ENCODE measurements at regions of chr2 and their contacts with region 1.

Region 1: GRCh38 chr2:234135720-234136221 is 85.3 kb downstream of the SPP2 start:
- DNase-seq: peak; percentile 83 to 88
- H3K4me3 ChIP-seq: no peak overlapping the region
- H3K4me1 ChIP-seq: no peaks in the 10 kb centered on the region
- H3K27me3 ChIP-seq: 0 out of 2 replicates have a peak, but pooled peaks cover 2% of the 10 kb centered on the region

Region 2: DNA sequence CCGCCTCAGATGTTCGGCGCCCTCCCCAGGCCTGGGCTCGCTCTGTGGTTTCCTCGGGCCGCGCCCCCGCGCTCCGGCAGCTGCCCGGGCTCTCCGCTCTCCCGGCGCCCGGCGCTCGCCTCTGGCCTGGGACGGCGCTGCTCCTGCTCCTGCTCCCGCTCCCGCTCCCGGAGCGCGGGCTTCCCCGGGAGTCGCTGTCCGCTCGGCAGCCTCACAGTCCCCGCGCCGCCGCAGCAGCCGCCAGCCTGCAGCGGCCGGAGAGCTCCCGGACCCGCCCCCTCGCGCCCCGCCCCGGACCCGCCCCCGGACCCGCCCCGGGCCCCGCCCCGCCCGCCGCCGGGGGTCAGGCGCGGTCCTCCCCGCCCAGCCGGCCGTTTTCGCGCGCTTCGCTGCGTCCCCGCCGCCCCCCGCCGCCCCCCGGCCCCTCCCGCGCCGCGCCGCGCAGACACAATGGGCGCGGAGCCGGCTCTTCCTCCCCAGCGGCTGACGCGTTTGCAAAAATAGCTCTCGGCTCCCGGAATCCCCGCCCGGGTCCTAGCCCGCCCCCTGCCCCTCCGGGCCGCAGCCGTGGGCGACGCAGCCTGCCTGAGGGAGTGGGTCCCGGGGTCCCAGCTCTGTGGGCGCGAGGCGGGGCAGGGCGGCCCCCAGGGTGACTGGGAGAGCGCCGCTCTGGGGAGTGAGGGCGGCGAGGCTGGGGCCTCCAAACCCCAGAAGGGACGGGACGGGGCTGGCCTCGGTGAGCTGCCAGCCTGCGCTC is 361.2 kb after region 1 on chr2 and contains the start of gene ARL4C:
- in situ Hi-C with region 1: loop called (anchors 5 kb)
- DNase-seq: peak; percentile 60 to 80
- H3K4me3 ChIP-seq: peak within 1 kb of the TSS; percentile 61
- H3K4me1 ChIP-seq: peaks cover 9% of the 10 kb centered on the region
- H3K27me3 ChIP-seq: no peaks in the 10 kb centered on the region

Region 3: GRCh38 chr2:234544659-234545611 is 409.2 kb after region 1 on chr2:
- in situ Hi-C with region 1: loop called (anchors 10 kb)
- DNase-seq: peak; percentile 14 to 83
- H3K4me3 ChIP-seq: no peak overlapping the region
- H3K4me1 ChIP-seq: 0 out of 2 replicates have a peak, but pooled peaks cover 2% of the 10 kb centered on the region
- H3K27me3 ChIP-seq: no peaks in the 10 kb centered on the region

Region 4: GRCh38 chr2:235106874-235107639 is 971.3 kb after region 1 on chr2:
- in situ Hi-C with region 1: loop called (anchors 10 kb)
- DNase-seq: peak; percentile 60 to 72
- H3K4me3 ChIP-seq: no peak overlapping the region
- H3K4me1 ChIP-seq: no peaks in the 10 kb centered on the region
- H3K27me3 ChIP-seq: no peaks in the 10 kb centered on the region

Measured in HAP-1 (cell line).